ENCODE measurements at regions of chr20 and their contacts with region 1.

Region 1: GRCh38 chr20:58618351-58619076 is 32.6 kb upstream of the STX16 start:
- DNase-seq: no peak
- H3K4me3 ChIP-seq: no peak overlapping the region
- H3K27ac ChIP-seq: no peak overlapping the region
- H3K4me1 ChIP-seq: peaks cover 0 to 9% (median 5%) of the 10 kb centered on the region in 4 experiments; a peak in 5 of 7 replicates
- H3K27me3 ChIP-seq: peaks cover 0 to 13% (median 7%) of the 10 kb centered on the region in 4 experiments; a peak in 4 of 7 replicates
- CTCF ChIP-seq: no peak
- EP300 ChIP-seq: no peak
- POLR2A ChIP-seq: no peak
- RAD21 ChIP-seq: no peak

Region 2: DNA sequence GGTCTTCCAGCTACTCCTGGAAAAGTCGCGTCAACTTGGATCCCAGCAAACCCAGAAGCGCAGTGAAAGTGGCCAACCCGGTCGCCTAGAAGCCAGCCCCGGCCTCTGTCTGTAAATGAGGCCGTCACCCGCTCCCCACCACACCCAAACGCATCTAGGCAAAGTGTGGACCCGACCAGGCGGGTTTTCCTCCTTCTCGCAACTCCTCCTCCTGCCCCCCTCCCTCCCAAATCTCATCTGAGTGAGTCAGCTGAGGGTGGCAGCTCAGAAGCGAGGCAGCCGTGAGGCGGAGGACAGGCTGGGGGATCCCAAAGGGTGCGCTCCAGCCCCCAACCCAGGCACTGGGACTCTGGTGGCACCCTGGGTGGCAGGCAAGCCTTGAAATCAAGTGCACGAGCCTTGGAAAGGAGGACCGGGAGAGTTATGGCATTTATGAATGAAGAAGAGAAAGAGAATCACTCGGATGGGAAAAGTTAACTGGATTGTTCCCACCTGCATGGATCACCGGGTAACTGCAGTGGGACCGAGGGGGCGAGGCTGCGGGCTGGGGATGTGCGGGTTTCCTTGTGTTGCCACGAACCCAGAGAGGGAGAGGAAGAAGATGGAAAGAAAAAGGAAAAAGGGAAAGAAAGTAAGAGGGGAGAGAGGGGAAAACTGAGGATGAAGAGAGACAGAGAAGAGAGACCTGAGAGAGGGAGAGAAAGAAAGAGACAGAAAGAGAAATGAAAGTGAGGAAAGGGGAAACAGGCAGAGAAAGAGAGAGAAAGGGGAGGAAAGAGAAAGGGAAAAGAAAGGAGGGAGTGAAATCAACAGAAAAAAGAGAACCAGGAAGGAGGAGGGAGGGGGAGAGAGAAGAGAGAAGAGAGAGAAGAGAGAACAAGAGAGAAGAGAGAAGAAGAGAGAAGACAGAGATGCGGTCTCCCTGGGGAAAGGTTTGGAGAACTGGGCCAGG is 103.0 kb before region 1 on chr20 and contains the start of gene APCDD1L:
- CTCF ChIA-PET with region 1: interaction called, 4 read pairs
- POLR2A ChIA-PET with region 1: interaction called, 17 read pairs
- DNase-seq: peak in 1 of 2 experiments; percentile 25
- H3K4me3 ChIP-seq: peak within 1 kb of the TSS; percentile 43 to 69 (median 56)
- H3K27ac ChIP-seq: no peak within 1 kb of the TSS
- H3K4me1 ChIP-seq: peaks cover 3 to 15% (median 8%) of the 10 kb centered on the region in 4 experiments
- H3K27me3 ChIP-seq: peaks cover 9 to 42% (median 37%) of the 10 kb centered on the region in 4 experiments
- CTCF ChIP-seq: no peak
- EP300 ChIP-seq: no peak
- POLR2A ChIP-seq: no peak
- RAD21 ChIP-seq: no peak; a peak in 1 of 4 replicates
- total RNA-seq, gene APCDD1L: 3.1 and 3.2 TPM in 2 replicates

Region 3: GRCh38 chr20:58630063-58630462 is 11.5 kb after region 1 on chr20:
- CTCF ChIA-PET with region 1: interaction called, 16 read pairs
- POLR2A ChIA-PET with region 1: interaction called, 7 read pairs
- DNase-seq: no peak
- H3K4me3 ChIP-seq: no peak overlapping the region
- H3K27ac ChIP-seq: no peak overlapping the region
- H3K4me1 ChIP-seq: peaks cover 0 to 2% (median 0%) of the 10 kb centered on the region in 4 experiments; a peak in 1 of 7 replicates
- H3K27me3 ChIP-seq: 0 out of 7 replicates have a peak, but pooled peaks cover 0 to 2% (median 0%) of the 10 kb centered on the region in 4 experiments
- CTCF ChIP-seq: no peak
- EP300 ChIP-seq: no peak
- POLR2A ChIP-seq: no peak
- RAD21 ChIP-seq: no peak

Region 4: GRCh38 chr20:58640446-58640845 is 21.9 kb after region 1 on chr20:
- CTCF ChIA-PET with region 1: interaction called, 6 read pairs
- POLR2A ChIA-PET with region 1: interaction called, 11 read pairs
- DNase-seq: no peak
- H3K4me3 ChIP-seq: no peak overlapping the region
- H3K27ac ChIP-seq: no peak overlapping the region
- H3K4me1 ChIP-seq: peaks cover 0 to 2% (median 0%) of the 10 kb centered on the region in 4 experiments; a peak in 1 of 7 replicates
- H3K27me3 ChIP-seq: no peaks in the 10 kb centered on the region; a peak in 1 of 7 replicates
- CTCF ChIP-seq: no peak
- EP300 ChIP-seq: no peak
- POLR2A ChIP-seq: no peak
- RAD21 ChIP-seq: no peak

Region 5: DNA sequence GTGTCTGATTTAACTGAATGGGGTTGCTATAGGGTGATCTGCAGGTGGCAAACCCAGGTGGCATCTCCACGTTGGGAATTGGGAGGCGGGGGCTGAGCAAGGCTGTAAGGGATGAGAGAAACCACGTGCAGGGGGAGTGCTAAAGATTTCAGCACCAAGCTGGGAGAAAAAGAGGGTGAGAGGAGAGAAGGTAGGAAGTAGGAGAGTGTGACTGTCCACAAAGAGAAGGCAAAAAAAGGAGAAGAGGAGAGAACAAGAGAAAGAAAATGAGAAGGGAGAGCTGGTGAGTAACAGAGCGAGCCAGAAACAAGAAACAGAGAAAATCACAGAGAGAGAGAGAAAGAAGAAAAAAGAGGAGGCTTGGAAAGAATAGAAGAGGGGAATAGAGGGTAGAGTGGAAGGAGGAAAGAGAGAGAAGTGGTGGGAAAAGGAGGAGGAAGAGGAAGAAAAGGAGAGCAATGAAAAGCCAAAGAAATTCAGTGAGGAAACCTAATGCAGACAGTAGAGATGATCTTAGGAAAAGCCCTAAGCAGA is 152.4 kb after region 1 on chr20:
- CTCF ChIA-PET with region 1: no interaction called
- POLR2A ChIA-PET with region 1: no interaction called
- DNase-seq: no peak
- H3K4me3 ChIP-seq: no peak overlapping the region
- H3K27ac ChIP-seq: no peak overlapping the region
- H3K4me1 ChIP-seq: no peaks in the 10 kb centered on the region
- H3K27me3 ChIP-seq: 0 out of 7 replicates have a peak, but pooled peaks cover 0 to 2% (median 0%) of the 10 kb centered on the region in 4 experiments
- CTCF ChIP-seq: no peak
- EP300 ChIP-seq: no peak
- POLR2A ChIP-seq: no peak
- RAD21 ChIP-seq: no peak

Measured in H1 (cell line).